ENCODE measurements at regions of chr7 and their contacts with region 1.

Region 1: DNA sequence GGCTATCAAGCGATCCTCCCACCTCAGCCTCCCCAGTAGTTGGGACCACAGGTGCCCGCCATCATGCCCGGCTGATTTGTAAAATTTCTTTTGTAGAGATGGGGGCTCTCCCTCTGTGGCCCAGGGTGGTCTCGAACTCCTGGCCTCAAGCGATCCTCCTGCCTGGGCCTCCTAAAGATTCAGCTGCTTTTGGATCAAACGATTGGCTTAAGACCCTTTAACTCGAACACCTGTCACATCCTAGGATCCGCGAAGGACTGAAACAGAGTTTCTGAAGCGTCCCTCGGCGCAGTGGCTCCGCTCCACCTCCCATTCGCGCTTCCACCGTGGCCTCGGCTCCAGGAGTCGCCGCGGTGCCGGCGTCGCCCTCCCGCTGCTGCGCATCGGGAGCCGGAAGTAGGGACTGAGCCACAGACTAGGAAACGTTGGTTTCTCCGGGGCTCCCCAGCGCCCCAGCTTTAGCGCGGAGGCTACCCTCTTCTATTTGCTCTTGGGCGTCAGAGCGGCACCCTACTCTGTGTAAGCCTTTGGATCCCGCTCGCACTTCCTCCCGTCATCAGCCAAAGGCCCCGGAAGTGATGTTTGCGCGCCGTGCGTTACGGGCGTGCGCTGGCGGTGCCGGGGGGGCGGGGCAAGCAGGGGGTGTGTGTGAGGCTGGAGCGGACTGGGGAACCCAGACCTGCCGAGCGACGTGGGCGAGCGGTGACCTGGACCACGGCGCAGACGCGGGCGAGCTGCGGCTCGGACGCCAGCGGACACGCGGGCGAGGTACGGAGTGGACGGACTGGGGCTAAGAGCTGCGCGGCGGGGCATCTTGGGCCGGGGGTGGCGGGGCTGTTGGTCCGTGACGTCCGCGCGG is 53.0 kb downstream of the KCTD7 start:
- DNase-seq: peak; percentile 93
- H3K27ac ChIP-seq: peak overlapping the region; percentile 91
- CTCF ChIP-seq: no peak

Region 2: DNA sequence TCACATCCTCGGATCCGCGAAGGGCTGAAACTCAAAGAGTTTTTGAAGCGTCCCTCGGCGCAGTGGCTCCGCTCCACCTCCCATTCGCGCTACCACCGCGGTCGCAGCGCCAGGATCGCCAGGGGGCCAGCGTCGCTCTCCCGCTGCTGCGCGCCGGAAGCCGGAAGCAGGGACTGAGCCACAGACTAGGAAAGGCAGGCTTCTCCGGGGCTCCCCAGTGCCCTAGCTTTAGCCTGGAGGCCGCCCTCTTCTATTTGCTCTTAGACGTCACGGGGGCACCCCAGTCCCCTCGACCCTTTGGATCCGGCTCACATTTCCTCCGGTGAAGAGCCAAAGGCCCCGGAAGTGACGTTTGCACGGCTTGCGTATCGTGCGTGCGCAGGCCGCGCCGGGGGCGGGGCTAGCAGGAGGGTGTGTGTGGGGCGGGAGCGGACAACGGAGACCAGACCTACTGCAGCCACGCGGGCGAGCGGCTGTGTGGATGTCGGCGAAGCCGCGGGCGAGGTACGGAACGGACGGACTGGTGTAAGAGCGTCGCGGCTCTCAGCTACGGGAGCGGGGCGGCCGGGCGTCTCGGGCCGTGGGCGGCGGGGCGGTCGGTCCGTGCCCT is 27.5 kb before region 1 on chr7:
- CTCF ChIA-PET with region 1: no interaction called
- POLR2A ChIA-PET with region 1: interaction called, 10 read pairs
- DNase-seq: peak; percentile 96
- H3K27ac ChIP-seq: peak overlapping the region; percentile 98
- CTCF ChIP-seq: no peak

Measured in RWPE1 (cell line).